ENCODE measurements at regions of chr5 and their contacts with region 1.

Region 1: DNA sequence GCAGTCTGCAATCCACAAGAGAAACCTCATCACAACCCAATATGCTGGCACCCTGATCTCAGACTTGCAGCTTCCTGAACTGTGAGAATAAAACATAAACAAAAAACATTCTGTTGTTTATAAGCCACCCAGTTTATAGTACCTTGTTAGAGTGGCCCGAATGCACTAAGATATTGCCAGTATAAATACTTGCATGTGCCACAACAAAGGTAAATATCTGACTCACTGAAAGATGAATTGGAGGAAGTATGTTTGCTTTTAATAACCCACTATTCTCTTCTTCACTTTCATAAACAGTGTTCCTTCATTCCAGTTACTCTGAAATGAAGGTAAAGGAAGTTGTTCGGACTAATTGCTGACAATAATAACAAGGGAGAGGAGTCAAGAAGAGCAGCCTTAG is 1163.4 kb upstream of the CDH6 start:
- DNase-seq: no peak
- ATAC-seq: no peak
- H3K4me3 ChIP-seq: no peak overlapping the region
- H3K27ac ChIP-seq: no peak overlapping the region
- H3K4me1 ChIP-seq: no peaks in the 10 kb centered on the region
- H3K27me3 ChIP-seq: no peaks in the 10 kb centered on the region
- CTCF ChIP-seq: no peak

Region 2: GRCh38 chr5:28226407-28226806 is 1803.7 kb before region 1 on chr5:
- intact Hi-C with region 1: loop called in 1 of 2 experiments (anchors 5 kb)
- DNase-seq: no peak
- ATAC-seq: no peak
- H3K4me3 ChIP-seq: no peak overlapping the region
- H3K27ac ChIP-seq: no peak overlapping the region
- H3K4me1 ChIP-seq: no peaks in the 10 kb centered on the region
- H3K27me3 ChIP-seq: no peaks in the 10 kb centered on the region
- CTCF ChIP-seq: no peak